Caco-2 (cell line): ENCODE measurements at regions of chr13 and their contacts with region 1.

Region 1: DNA sequence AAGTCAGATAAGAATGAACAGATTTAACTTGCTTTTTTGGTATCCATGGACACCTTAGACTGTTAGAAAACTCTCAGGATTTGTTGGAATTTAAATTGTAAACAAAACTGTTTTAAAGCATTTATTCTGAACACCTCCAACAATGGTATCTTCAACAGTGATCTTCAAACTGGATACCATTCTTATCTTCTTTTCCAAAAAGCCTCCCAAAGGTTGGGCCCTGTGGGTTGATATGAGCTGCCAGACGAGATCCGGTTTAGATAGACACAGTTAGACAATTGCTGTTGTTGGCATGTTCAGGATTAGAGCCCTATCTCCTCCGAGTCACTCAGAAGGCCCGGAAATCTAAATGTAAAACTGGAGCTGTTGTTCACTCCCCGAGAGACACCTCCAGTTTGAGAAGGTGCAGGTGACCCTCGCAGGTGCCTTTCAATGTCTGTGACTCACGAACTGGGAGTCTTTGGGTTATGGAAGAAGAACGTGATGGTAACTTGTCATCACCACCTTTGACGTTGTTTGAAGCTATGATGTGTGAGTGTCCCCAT is 143.6 kb upstream of the RNF113B start:
- DNase-seq: peak; percentile 76 to 80
- H3K4me3 ChIP-seq: no peak overlapping the region
- H3K4me3 Mint-ChIP-seq: peak overlapping the region; percentile 2
- H3K27ac Mint-ChIP-seq: peak overlapping the region; percentile 74
- H3K4me1 ChIP-seq: peaks cover 21% of the 10 kb centered on the region
- H3K4me1 Mint-ChIP-seq: peaks cover 36% of the 10 kb centered on the region
- H3K27me3 ChIP-seq: no peaks in the 10 kb centered on the region
- H3K27me3 Mint-ChIP-seq: no peaks in the 10 kb centered on the region
- CTCF ChIP-seq: no peak

Region 2: GRCh38 chr13:98173431-98174152 is 147.0 kb before region 1 on chr13:
- CTCF ChIA-PET with region 1: no interaction called
- POLR2A ChIA-PET with region 1: no interaction called
- intact Hi-C with region 1: no loop called
- DNase-seq: peak in 1 of 2 experiments; percentile 38
- H3K4me3 ChIP-seq: no peak overlapping the region
- H3K4me3 Mint-ChIP-seq: peak overlapping the region; percentile 20
- H3K27ac Mint-ChIP-seq: peak overlapping the region; percentile 82
- H3K4me1 ChIP-seq: peaks cover 54% of the 10 kb centered on the region
- H3K4me1 Mint-ChIP-seq: peaks cover 30% of the 10 kb centered on the region
- H3K27me3 ChIP-seq: no peaks in the 10 kb centered on the region
- H3K27me3 Mint-ChIP-seq: no peaks in the 10 kb centered on the region
- CTCF ChIP-seq: no peak

Region 3: GRCh38 chr13:98260357-98261164 is 60.1 kb before region 1 on chr13:
- CTCF ChIA-PET with region 1: no interaction called
- POLR2A ChIA-PET with region 1: no interaction called
- intact Hi-C with region 1: loop called (anchors 1 kb)
- DNase-seq: no peak
- H3K4me3 ChIP-seq: no peak overlapping the region
- H3K4me3 Mint-ChIP-seq: no peak overlapping the region
- H3K27ac Mint-ChIP-seq: peak overlapping the region; percentile 37
- H3K4me1 ChIP-seq: peaks cover 50% of the 10 kb centered on the region
- H3K4me1 Mint-ChIP-seq: peaks cover 54% of the 10 kb centered on the region
- H3K27me3 ChIP-seq: no peaks in the 10 kb centered on the region
- H3K27me3 Mint-ChIP-seq: no peaks in the 10 kb centered on the region
- CTCF ChIP-seq: no peak